OCI-LY7 (cell line): ENCODE measurements at regions of chr2 and their contacts with region 1.

Region 1: DNA sequence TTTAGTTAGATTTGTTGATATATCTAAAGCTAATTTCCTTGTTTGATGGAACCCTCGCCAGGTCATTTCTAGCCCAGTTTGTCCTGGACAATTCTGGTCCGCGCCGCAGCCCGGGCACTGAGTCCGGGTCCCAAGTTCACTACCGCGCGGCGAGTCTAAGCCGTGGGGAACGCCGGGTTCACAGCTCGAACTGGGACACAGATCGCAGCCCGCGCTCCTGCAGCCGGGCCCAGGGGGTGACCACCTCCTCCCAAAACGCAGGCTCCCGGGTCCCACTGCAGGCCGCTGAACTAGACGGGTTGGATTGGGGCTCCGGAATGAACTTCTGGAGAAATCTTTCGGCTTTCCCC is 681 bp downstream of the ACADL start:
- DNase-seq: no peak
- H3K4me3 ChIP-seq: no peak overlapping the region
- H3K27ac ChIP-seq: no peak overlapping the region
- H3K4me1 ChIP-seq: no peaks in the 10 kb centered on the region
- CTCF ChIP-seq: no peak

Region 2: DNA sequence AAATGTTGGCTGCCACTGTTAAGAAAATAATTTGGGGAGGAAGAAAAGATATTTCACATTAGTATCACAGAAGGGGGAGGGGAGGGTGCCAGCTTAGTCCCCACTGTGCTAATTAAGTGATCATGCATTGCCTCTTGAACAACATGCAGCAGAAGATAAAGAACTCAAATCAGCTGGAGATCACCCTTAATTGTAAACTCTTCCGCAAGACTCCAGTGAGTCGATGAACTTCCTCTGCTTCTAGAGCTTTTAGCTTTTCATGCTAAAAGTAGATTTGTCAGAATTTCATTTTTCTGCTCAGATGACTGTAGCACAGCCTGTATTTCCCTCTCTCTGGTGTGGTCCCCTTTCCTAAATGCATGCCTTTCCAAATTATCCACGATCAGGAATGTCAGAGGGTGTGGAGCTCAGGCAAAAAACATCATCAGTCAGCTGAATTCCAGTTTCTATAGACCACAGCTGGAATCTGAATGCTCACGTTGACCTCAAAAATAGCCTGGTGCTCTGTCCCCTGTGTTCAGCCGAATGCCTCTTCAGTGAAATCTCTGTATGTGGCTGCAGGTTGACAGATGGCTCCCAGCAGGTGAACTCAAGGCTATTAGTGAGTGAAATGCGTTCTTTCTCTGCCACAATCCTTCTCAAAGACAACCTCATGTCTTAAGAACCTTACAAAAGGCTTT is 609.7 kb before region 1 on chr2:
- CTCF ChIA-PET with region 1: no interaction called
- POLR2A ChIA-PET with region 1: interaction called, 12 read pairs
- intact Hi-C with region 1: no loop called
- DNase-seq: no peak
- H3K4me3 ChIP-seq: no peak overlapping the region
- H3K27ac ChIP-seq: no peak overlapping the region
- H3K4me1 ChIP-seq: no peaks in the 10 kb centered on the region
- CTCF ChIP-seq: no peak

Region 3: GRCh38 chr2:210252699-210253606 is 28.4 kb after region 1 on chr2:
- CTCF ChIA-PET with region 1: no interaction called
- POLR2A ChIA-PET with region 1: no interaction called
- intact Hi-C with region 1: no loop called
- DNase-seq: no peak
- H3K4me3 ChIP-seq: no peak overlapping the region
- H3K27ac ChIP-seq: no peak overlapping the region
- H3K4me1 ChIP-seq: no peaks in the 10 kb centered on the region
- CTCF ChIP-seq: no peak